ENCODE measurements at regions of chr3 and their contacts with region 1.

Region 1: DNA sequence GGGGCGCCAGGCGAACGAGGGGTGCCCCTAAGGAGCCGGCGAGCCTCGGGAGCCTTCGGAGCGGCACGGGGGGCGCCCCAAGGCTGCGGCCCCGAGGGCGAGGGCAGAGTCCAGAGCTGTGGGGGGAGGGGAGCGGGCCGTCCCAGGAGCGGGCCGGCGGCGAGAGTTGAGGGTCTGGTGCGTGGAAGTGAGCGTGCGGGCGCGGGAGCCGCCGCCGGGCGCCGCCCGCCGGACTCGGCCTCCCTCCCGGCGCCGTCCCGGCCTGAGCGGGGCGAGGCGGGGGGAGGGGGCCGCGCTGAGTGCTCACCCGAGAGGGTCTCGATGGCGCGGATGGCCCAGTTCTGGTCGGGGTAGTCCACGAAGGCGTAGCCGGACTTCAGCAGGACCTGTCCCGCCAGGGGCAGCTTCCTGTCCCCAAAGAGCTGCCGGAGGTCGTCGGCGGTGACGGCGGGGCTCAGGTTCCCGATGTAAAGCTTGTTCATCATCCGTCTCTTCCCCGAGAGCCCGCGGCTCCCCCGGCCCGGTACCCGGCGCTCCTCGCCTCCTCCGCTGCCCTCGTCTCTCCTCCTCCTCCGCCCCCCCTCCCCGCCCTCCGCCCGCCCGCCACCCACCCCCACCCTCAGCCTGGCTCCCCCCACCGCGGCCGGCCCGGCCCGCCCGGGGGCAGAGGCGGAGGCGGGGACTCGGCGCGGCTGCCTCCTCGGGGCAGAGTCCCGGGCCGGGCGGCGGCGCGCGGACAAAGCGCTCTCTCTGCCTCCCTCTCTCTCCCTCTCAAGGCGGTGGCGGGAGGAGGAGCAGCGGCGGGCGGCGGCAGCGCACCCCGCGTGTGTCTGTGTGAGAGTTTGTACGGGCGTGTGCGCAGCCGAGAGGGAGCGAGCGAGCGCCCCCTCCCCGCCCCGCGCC is at the start of gene IGF2BP2:
- DNase-seq: peak; percentile 78
- H3K4me3 Mint-ChIP-seq: peak within 1 kb of the TSS; percentile 96
- H3K27ac Mint-ChIP-seq: peak within 1 kb of the TSS; percentile 99
- H3K4me1 Mint-ChIP-seq: peaks cover 23% of the 10 kb centered on the region
- H3K27me3 Mint-ChIP-seq: no peaks in the 10 kb centered on the region
- CTCF ChIP-seq: no peak
- total RNA-seq, gene IGF2BP2: 108 and 154 TPM in 2 replicates

Region 2: DNA sequence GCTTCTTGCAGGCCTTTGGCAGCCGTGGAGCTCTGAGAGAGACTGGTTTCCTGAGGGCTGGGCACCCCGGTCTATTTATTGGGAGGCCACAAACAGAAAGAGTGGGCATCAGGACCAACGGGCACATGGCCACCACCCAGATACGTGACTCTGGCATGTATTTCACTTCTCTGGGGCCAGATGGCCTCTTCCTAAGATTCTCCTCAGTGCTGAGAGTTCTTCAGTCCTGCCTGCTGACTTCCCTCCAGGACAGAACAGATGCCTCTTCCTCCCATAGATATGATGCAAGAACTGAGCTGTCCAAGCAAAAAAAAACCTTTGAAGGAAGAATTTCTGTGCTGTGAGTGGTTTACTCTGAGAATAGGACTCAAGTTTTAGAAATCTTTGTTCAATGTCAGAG is 107.6 kb before region 1 on chr3:
- CTCF ChIA-PET with region 1: interaction called, 3 read pairs
- POLR2A ChIA-PET with region 1: interaction called, 19 read pairs
- intact Hi-C with region 1: no loop called
- DNase-seq: peak; percentile 74
- H3K4me3 Mint-ChIP-seq: peak overlapping the region; percentile 40
- H3K27ac Mint-ChIP-seq: peak overlapping the region; percentile 96
- H3K4me1 Mint-ChIP-seq: peaks cover 55% of the 10 kb centered on the region
- H3K27me3 Mint-ChIP-seq: no peaks in the 10 kb centered on the region
- CTCF ChIP-seq: no peak

Region 3: GRCh38 chr3:185758912-185759311 is 65.8 kb before region 1 on chr3:
- CTCF ChIA-PET with region 1: no interaction called
- POLR2A ChIA-PET with region 1: interaction called, 14 read pairs
- intact Hi-C with region 1: no loop called
- DNase-seq: no peak
- H3K4me3 Mint-ChIP-seq: no peak overlapping the region
- H3K27ac Mint-ChIP-seq: peak overlapping the region; percentile 2
- H3K4me1 Mint-ChIP-seq: peaks cover 57% of the 10 kb centered on the region
- H3K27me3 Mint-ChIP-seq: no peaks in the 10 kb centered on the region
- CTCF ChIP-seq: no peak

Region 4: DNA sequence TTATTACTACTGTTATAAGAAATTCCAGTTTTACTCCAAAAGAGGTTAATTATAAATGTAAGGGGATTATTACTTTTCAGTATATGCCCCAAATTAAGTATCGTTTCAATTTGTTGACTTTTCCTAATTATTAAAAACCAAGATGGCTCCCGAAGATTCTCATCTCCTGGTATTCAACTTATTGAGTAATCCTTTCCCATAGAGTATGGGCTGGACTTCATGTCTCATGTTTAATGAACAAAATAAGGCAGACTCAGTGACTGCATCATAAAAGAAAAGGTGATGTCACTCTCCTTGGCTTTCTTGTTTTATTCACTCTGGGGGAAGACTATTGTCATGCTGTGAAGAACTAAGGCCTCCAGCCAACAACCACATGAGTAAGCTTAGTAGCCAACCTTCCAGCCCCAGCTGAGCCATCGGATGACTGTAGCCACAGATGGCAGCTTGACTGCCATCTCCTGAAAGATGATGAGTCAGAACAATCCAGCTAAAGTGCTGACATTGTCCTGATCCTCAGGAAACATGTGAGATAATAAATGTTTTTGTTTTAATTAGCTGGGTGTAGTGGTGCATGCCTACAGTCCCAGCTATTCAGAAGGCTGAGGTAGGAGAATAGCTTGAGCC is 17.2 kb before region 1 on chr3:
- CTCF ChIA-PET with region 1: interaction called, 3 read pairs
- POLR2A ChIA-PET with region 1: interaction called, 49 read pairs
- intact Hi-C with region 1: no loop called
- DNase-seq: peak; percentile 81
- H3K4me3 Mint-ChIP-seq: no peak overlapping the region
- H3K27ac Mint-ChIP-seq: peak overlapping the region; percentile 35
- H3K4me1 Mint-ChIP-seq: peaks cover 5% of the 10 kb centered on the region
- H3K27me3 Mint-ChIP-seq: no peaks in the 10 kb centered on the region
- CTCF ChIP-seq: no peak

Region 5: DNA sequence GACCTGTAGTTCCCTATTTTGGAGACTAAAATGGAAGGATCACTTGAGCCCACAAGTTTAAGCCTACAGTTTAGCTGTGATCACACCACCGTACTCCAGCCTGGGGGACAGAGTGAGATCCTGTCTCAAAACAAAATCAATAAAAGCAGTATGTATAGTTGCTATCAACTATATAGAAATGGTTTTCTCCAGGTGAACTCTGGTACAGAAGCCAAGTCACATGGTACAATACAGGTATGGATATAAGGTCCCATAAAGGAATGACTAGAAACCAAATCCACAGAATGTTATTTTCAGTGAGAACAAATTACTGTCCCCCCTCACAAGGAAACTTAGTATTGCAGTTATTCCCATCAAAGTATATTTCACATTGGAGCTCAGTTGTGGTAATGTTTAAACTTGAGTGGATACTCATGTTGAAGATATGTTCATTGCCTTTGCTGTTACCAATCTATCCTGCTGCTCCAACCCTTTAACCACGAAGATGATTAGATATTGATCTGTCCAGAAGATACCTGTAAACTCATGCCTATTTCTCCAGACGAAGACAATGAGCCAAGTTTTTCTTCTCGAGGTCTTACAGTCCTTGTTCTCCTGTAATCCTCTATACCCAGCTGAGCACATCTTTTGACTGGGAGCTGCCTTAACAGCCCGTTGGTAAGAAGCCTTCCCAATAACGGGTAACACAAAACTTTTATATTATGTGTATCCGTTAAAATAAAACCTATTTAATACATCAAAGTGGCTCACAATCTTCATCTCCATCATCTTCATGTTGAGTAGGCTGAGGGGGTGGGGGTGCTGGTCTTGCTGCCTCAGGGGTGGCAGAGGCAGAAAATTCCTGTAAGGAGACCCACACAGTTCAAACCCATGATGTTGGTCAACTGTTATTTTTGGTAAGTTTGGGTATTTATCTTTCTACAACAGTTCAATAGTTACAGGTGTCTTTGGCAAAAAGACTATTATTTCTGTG is 88.5 kb after region 1 on chr3:
- CTCF ChIA-PET with region 1: no interaction called
- POLR2A ChIA-PET with region 1: interaction called, 13 read pairs
- intact Hi-C with region 1: no loop called
- DNase-seq: no peak
- H3K4me3 Mint-ChIP-seq: no peak overlapping the region
- H3K27ac Mint-ChIP-seq: no peak overlapping the region
- H3K4me1 Mint-ChIP-seq: no peaks in the 10 kb centered on the region
- H3K27me3 Mint-ChIP-seq: no peaks in the 10 kb centered on the region
- CTCF ChIP-seq: no peak

Measured in MCF 10A (cell line).